AG04450 (cell line): ENCODE measurements at regions of chr6 and their contacts with region 1.

Region 1: DNA sequence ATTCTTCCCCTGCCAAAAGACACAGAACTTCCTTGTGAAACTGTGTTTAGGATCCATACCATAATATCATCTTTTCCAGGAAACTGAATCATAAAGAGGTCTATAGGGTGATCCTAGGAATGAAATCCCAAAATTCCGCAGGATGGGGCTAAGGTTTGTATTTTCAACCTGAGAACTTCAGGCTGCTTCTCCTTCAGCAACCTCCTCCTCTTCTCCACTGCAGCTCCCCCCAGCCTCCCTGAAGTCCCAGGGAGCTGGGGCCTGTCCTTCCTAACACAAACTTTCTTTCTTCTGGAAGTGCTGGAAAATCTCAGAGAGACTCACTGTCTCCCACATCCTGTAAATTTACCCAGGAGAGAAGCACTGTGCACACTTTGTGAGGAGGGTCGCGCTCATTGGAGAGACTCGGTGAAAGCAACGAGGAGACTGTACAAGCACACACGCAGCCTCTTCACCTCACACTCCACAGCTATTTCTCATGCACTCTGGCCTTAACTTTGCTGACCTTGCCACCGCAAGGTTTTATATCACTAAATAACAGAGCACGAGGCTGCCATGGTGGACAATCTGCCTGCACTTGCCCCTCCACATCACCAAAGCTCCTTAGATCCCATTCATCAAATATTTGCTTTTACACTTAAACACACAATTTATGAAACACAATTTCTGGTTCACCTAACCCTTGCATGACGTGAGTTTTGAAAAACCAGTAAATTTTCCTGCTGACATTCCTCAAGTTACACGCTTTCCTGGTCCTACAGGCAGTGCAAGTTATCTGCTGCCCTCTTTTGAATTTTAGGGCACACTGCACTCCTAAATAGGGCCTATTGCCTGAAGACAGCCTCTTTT is 14.3 kb downstream of the ID4 start:
- DNase-seq: peak; percentile 42
- H3K4me3 ChIP-seq: no peak overlapping the region
- H3K27ac ChIP-seq: no peak overlapping the region
- H3K27me3 ChIP-seq: no peaks in the 10 kb centered on the region
- CTCF ChIP-seq: peak; percentile 98

Region 2: DNA sequence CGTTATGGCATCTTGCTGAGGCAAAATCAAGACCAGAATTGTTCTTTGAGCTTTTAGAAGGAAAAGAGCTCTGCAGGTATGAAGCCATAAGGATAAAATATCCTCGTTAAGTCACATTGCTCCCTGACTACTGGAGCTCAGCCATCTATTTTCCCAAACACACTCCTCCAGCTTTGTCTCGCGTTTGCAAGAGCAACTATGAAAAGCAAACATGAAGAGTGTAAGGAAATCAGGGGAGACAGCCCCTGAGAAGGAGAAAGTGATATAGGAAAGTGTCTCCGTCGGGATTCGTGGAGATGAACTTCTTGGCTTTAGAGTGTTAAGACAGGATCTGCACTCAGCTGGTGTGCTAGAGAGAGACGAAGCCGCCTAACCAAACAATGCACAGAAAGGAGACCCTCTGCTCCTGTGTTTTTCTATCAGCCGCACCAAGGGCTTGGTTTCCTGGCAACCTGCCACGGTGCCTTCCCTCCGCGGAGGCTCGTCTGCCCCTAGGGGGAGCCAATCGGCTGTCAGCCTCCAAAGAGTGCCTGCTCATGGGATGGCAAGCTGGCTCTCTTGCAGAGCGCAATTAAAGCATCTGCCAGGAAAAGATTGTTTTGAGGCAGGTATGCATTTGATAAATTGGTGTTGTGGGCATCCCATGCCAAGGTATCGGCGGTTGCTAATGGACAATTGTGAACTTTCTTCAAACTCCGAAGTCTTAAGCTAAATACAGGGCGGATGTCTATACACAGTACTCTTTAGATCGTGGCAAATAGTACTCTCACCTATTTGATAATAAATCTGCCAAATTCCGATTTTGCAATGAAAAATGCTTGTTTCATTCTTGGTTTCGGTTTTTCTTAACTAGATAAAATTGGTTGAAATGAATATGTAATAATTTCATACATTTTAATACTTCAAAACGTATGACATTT is 861.1 kb before region 1 on chr6:
- CTCF ChIA-PET with region 1: interaction called, 11 read pairs
- POLR2A ChIA-PET with region 1: no interaction called
- DNase-seq: no peak
- H3K4me3 ChIP-seq: no peak overlapping the region
- H3K27ac ChIP-seq: no peak overlapping the region
- H3K27me3 ChIP-seq: no peaks in the 10 kb centered on the region
- CTCF ChIP-seq: peak; percentile 66

Region 3: DNA sequence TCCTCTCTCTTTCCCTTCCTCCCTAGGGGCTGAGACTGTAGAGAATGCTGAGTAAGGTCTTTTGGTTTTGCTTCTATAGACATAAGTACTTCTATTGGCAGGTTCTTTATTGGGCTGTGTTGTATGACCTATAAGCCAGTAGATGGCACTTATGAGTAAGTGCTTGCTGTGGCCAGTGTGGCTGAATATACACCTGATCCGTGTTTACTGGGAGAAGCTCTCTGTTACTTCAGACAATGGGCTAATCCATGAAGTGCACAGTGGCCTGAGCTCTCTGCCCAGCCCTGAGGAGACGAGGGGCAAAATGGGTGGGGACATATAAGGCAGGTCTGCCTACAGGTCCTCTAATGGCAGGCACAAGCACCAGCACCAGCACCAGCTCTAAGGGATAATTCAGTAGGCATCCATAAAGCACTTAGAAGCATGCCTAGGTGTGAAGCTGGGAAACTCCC is 854.1 kb before region 1 on chr6:
- CTCF ChIA-PET with region 1: interaction called, 11 read pairs
- POLR2A ChIA-PET with region 1: no interaction called
- DNase-seq: no peak
- H3K4me3 ChIP-seq: no peak overlapping the region
- H3K27ac ChIP-seq: no peak overlapping the region
- H3K27me3 ChIP-seq: no peaks in the 10 kb centered on the region
- CTCF ChIP-seq: peak; percentile 75

Region 4: GRCh38 chr6:19024737-19025136 is 826.7 kb before region 1 on chr6:
- CTCF ChIA-PET with region 1: interaction called, 10 read pairs
- POLR2A ChIA-PET with region 1: no interaction called
- DNase-seq: no peak
- H3K4me3 ChIP-seq: no peak overlapping the region
- H3K27ac ChIP-seq: no peak overlapping the region
- H3K27me3 ChIP-seq: no peaks in the 10 kb centered on the region
- CTCF ChIP-seq: peak; percentile 52

Region 5: GRCh38 chr6:19549113-19549512 is 302.4 kb before region 1 on chr6:
- CTCF ChIA-PET with region 1: interaction called, 26 read pairs
- POLR2A ChIA-PET with region 1: no interaction called
- DNase-seq: no peak
- H3K4me3 ChIP-seq: no peak overlapping the region
- H3K27ac ChIP-seq: no peak overlapping the region
- H3K27me3 ChIP-seq: no peaks in the 10 kb centered on the region
- CTCF ChIP-seq: no peak

Region 6: GRCh38 chr6:19836799-19837510 is 14.5 kb before region 1 on chr6 and contains the start of gene ID4:
- CTCF ChIA-PET with region 1: interaction called, 15 read pairs
- POLR2A ChIA-PET with region 1: interaction called, 11 read pairs
- DNase-seq: peak; percentile 87
- H3K4me3 ChIP-seq: peak within 1 kb of the TSS; percentile 68
- H3K27ac ChIP-seq: peak within 1 kb of the TSS; percentile 73
- H3K27me3 ChIP-seq: no peaks in the 10 kb centered on the region
- CTCF ChIP-seq: 0 out of 2 replicates have a peak, but pooled peaks have one; percentile 7
- polyA plus RNA-seq, gene ID4: 0.32 and 0.55 TPM in 2 replicates

Region 7: GRCh38 chr6:19925533-19925932 is 74.1 kb after region 1 on chr6:
- CTCF ChIA-PET with region 1: no interaction called
- POLR2A ChIA-PET with region 1: no interaction called
- DNase-seq: no peak
- H3K4me3 ChIP-seq: no peak overlapping the region
- H3K27ac ChIP-seq: no peak overlapping the region
- H3K27me3 ChIP-seq: no peaks in the 10 kb centered on the region
- CTCF ChIP-seq: no peak